AG04450 (cell line): ENCODE measurements at regions of chr13 and their contacts with region 1.

Region 1: DNA sequence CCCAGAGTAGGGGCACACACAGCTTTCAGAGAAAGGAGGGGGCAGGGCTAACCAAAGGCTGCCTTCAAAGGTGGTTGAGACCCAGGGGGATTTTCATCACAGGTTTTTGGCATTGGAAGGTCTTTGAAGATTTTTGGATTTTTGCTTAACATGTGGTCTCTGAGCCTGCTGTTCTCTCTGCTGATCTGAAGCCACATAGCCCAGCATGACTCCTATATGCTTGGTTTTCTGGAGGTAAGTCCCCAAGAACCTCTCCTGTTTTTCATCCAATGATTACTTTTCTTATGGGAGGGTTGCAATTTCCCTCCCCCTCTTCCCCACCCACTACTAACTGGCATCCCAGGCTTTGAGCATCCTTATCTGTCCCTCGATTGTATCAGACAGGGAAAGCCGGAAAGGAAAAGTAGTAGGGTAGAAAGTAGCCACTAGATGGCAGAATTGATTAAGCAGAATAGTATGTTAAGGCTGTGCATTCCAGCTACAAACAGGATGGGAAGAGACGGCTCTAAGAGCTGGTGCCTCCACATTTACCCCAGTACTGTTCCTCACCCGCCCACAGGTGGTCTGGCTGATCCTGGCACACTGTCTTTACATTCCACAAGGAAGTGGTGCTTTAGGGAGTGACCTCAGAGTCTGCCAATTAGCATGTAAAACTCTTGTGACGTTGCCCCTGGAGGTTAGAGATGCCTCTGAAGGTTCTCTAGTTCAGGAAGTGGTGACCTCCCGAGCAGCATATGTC is 218.9 kb upstream of the EDNRB start:
- DNase-seq: peak; percentile 49
- H3K4me3 ChIP-seq: no peak overlapping the region
- H3K27ac ChIP-seq: no peak overlapping the region
- H3K27me3 ChIP-seq: no peaks in the 10 kb centered on the region
- CTCF ChIP-seq: peak; percentile 79

Region 2: DNA sequence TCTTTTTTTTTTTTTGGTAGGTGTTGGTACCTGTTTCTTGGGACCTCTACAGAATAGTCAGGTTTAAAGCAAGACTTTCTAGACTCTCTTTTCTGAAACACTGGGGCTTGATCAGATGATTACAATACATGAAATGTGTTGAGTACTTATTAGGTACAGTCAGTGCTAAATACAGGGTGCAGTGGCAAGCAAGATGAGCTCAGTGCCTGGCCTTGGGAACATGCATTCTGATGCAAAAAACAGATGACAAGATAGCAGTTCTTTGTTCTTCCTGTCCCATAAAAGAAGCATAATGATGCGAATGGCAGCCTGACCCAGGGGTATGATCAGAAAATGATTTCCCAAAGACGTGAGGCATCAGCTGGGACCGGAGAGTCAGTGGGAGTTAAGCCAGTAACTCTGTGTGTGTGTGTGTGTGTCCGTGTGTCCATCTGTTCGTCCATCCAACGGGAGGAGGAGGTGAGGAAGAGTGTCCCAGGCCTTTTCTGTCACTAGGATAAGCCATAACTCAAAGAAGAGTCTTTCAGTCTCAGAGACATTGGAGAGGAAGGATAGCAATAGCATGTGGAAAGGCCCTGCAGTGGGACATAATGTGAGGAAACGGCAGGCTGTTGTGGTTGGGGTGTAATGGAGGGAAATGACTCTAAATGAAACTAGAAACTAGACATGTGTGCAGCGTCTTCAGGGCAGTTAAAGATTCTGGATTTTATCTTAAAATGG is 407.9 kb before region 1 on chr13:
- CTCF ChIA-PET with region 1: no interaction called
- POLR2A ChIA-PET with region 1: no interaction called
- DNase-seq: no peak
- H3K4me3 ChIP-seq: no peak overlapping the region
- H3K27ac ChIP-seq: no peak overlapping the region
- H3K27me3 ChIP-seq: no peaks in the 10 kb centered on the region
- CTCF ChIP-seq: no peak

Region 3: DNA sequence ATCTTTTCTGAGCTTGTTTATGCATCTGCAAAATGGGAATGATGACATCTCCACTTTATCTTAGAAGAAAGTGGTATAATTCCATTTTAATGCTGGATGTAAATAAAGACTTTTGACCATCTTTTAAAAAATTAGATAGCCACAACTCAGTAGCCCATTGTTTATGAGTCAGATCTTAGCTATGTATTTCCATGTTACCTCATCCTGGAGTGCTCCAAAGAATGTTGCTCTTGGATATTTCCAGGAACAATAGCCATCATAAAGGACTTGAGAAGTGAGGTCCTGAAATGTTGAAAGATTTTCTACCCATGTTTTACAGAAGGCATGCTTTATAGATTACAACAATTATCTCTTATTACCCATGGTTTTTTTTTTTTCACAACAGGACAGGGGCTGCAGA is 10.3 kb after region 1 on chr13:
- CTCF ChIA-PET with region 1: interaction called, 18 read pairs
- POLR2A ChIA-PET with region 1: no interaction called
- DNase-seq: peak; percentile 27
- H3K4me3 ChIP-seq: no peak overlapping the region
- H3K27ac ChIP-seq: no peak overlapping the region
- H3K27me3 ChIP-seq: no peaks in the 10 kb centered on the region
- CTCF ChIP-seq: no peak

Region 4: DNA sequence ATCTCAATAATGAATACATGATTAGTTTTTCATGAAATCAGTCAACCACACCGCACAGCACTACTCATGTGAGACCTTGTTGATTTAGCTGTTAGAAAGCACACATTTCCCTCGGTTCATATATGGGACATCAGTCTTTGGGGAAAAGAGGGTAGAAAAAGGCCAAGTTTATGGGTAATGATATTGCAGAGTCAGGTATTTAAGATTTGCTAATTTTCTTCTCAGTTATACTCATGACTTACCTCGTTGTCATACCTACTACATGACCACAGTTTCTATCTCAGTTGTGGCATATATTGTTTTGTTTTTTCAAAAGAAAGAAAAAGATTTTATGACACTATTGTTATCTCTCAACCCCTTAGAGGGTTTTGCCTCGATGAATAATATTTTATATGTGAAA is 300.2 kb after region 1 on chr13:
- CTCF ChIA-PET with region 1: no interaction called
- POLR2A ChIA-PET with region 1: no interaction called
- DNase-seq: no peak
- H3K4me3 ChIP-seq: no peak overlapping the region
- H3K27ac ChIP-seq: no peak overlapping the region
- H3K27me3 ChIP-seq: no peaks in the 10 kb centered on the region
- CTCF ChIP-seq: no peak

Region 5: DNA sequence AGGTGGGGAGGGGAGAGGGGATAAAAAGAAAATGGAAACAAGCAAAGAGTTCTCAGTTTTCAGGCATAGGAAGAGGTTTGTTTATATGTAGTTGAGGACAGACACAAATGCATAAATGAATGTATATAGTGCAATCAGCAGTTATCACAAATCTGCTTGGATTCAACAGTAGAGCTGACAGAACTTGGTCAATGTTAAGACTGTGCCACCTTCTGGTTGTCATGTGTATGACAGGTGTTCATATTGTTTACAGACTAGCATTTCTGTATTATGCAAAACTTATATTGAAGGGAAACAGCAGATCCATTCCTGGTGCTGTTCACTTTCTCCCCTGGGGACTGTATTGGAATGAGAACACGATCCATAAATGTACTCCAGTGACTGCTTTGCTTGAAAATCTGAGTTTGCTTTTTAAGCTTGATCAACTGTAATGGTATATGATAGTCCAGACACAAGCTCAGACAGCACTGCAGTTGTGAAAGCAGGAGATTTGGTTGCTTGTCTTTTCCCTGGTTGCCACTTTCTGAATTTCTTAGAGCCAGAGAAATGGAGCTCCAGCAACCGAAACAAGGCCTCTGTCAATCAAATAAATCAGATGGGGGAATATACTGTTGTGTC is 840.9 kb after region 1 on chr13:
- CTCF ChIA-PET with region 1: interaction called, 70 read pairs
- POLR2A ChIA-PET with region 1: interaction called, 4 read pairs
- DNase-seq: peak; percentile 29
- H3K4me3 ChIP-seq: no peak overlapping the region
- H3K27ac ChIP-seq: no peak overlapping the region
- H3K27me3 ChIP-seq: no peaks in the 10 kb centered on the region
- CTCF ChIP-seq: peak; percentile 70